ENCODE measurements at regions of chr11 and their contacts with region 1.

Region 1: DNA sequence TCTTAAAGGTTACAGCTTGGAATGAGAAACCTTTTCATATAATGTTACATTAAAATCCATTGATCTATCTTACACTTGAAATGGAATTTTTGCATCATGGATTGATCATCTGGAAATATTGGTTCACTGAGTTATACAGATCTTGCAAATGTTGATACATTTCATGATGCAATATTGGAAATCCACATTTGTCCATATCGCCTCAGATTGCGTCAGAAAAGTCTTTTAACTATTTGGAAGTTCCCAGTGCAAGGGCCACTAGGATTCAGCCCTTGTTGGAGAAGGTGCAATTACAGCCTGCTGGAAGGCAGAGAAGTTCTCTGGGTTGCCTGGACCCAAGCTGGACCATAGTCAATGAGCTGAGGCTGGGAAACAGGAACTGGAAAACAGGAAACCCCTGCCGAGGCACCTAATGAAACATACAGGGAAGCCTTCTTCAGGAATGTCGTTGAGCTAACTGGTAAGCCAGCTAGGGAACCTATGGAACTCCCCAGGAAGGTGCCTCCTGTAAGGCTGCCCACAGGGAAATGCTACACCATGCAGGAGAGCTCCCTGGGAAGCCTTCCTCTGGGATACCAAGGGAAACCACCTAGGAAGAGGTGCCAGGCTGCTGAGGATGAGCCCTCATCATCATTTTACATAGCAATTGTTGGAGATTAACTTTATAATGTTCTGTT is 600.4 kb upstream of the CADM1 start:
- DNase-seq: no peak
- H3K4me3 ChIP-seq: no peak overlapping the region
- H3K27ac ChIP-seq: no peak overlapping the region
- H3K4me1 ChIP-seq: no peaks in the 10 kb centered on the region
- H3K27me3 ChIP-seq: no peaks in the 10 kb centered on the region
- CTCF ChIP-seq: no peak
- EP300 ChIP-seq: no peak
- POLR2A ChIP-seq: no peak

Region 2: DNA sequence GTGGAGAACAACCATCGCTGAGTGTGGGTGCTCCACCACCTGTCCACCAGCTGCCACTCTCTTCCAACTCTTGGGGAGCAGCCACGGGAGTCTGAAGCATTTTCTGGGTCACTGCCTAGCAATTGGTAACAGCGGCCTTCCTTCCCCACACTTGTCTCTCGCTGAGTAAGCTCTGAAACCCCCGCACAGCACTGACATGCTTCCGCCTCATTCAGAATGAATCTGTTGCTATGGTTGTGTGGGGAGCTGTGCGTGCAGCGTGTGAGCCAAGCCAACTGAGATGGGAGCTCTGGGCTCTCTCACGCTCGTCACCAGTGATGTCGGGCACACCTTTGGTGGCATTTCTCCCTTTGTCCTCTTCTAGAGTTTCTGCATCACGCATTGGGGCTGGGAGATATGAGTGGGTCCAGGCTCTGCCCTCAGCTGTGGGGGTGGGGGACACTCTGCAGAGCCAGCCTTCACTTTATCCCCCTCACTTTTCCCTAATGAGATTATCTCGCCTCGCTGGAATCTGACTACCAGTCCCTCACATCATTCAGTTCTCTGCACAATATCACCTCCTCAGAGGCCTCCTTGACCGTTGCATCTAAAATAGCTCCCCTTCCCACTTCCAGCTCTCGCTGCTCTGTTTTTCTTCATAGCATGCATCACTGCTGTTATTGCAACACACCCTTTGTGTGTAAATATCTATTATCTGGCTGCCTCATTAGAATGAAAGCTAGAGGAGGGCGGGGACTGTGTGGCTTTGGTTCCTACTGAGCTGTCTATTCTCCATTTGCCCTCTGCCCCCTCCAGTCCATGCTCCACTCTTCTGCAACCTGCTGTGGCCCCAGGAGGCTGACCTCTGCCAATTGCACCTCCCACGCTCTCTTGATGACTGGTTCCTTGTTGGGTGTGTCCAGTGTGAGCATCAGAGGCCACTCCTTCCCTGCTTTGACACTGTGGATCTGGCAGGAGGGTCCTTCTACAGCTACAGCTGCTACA is 30.5 kb before region 1 on chr11:
- in situ Hi-C with region 1: no loop called
- intact Hi-C with region 1: loop called (anchors 1 kb)
- DNase-seq: no peak
- H3K4me3 ChIP-seq: no peak overlapping the region
- H3K27ac ChIP-seq: no peak overlapping the region
- H3K4me1 ChIP-seq: no peaks in the 10 kb centered on the region
- H3K27me3 ChIP-seq: peaks cover 7% of the 10 kb centered on the region
- CTCF ChIP-seq: no peak
- EP300 ChIP-seq: no peak
- POLR2A ChIP-seq: no peak